Heart left ventricle (tissue), 16 donors: ENCODE measurements at regions of chr22 and their contacts with region 1.

Region 1: GRCh38 chr22:21735200-21736076 is at the start of gene YPEL1:
- DNase-seq: peak; percentile 97 to 99 (median 98)
- ATAC-seq: peak; percentile 94 to 99 (median 98)
- H3K4me3 ChIP-seq: peak within 1 kb of the TSS; percentile 42 to 87 (median 70)
- H3K27ac ChIP-seq: peak within 1 kb of the TSS; percentile 41 to 87 (median 74)
- H3K4me1 ChIP-seq: peaks cover 0 to 18% (median 8%) of the 10 kb centered on the region in 12 donors
- H3K27me3 ChIP-seq: no peaks in the 10 kb centered on the region
- CTCF ChIP-seq: peak in 1 of 12 donors; percentile 4
- POLR2A ChIP-seq: peak; percentile 92 to 99
- total RNA-seq, gene YPEL1: 6.3 to 10.0 (median 7.5) TPM

Region 2: DNA sequence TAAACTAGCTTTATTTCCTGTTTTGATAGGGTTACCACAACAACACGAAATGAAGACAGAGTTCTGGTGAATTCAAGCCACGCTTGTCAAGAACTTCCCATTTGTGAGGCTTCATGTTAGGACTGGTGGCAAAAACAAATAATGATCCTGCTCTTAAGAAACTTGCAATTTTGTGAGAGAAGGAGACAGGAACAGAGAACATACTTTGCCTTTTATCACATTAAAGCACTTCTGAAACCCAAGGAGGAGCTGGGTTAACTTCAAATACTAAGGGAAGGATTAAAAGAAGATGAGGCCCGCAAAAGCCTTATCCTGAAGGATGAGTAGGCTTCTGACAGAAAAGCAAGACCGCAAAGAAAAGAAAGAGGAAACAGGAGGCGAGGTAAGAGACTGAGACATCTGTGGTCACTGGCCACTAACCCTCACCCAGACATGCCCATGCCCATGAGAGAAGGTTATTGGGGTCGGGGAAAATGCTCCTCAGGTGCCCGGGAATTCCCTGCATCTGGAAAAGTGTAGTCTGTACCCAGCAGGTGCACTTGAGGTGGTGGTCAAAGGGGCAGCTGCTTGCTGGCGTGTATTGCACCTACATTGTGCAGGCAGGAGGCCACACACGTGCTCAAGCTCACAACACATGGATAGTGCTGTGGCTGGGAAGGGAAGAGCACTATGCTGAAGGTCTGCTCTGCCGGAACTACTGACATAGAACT is 81.5 kb after region 1 on chr22:
- intact Hi-C with region 1: loop called in 1 of 10 experiments (anchors 10 kb)
- DNase-seq: no peak
- ATAC-seq: peak; percentile 62 to 92 (median 88)
- H3K4me3 ChIP-seq: peak overlapping the region in 4 of 12 donors; percentile 2 to 29 (median 3)
- H3K27ac ChIP-seq: peak overlapping the region in 10 of 12 donors; percentile 28 to 90 (median 59)
- H3K4me1 ChIP-seq: peaks cover 5 to 56% (median 36%) of the 10 kb centered on the region in 12 donors
- H3K27me3 ChIP-seq: no peaks in the 10 kb centered on the region
- CTCF ChIP-seq: no peak
- POLR2A ChIP-seq: no peak

Region 3: GRCh38 chr22:21837248-21837979 is 102.0 kb after region 1 on chr22:
- intact Hi-C with region 1: no loop called
- DNase-seq: peak in 1 of 5 donors; percentile 42
- ATAC-seq: peak; percentile 91 to 96 (median 94)
- H3K4me3 ChIP-seq: peak overlapping the region in 1 of 12 donors; percentile 7
- H3K27ac ChIP-seq: peak overlapping the region; percentile 71 to 93 (median 88)
- H3K4me1 ChIP-seq: peaks cover 10 to 66% (median 51%) of the 10 kb centered on the region in 12 donors
- H3K27me3 ChIP-seq: no peaks in the 10 kb centered on the region
- CTCF ChIP-seq: no peak
- POLR2A ChIP-seq: no peak

Region 4: DNA sequence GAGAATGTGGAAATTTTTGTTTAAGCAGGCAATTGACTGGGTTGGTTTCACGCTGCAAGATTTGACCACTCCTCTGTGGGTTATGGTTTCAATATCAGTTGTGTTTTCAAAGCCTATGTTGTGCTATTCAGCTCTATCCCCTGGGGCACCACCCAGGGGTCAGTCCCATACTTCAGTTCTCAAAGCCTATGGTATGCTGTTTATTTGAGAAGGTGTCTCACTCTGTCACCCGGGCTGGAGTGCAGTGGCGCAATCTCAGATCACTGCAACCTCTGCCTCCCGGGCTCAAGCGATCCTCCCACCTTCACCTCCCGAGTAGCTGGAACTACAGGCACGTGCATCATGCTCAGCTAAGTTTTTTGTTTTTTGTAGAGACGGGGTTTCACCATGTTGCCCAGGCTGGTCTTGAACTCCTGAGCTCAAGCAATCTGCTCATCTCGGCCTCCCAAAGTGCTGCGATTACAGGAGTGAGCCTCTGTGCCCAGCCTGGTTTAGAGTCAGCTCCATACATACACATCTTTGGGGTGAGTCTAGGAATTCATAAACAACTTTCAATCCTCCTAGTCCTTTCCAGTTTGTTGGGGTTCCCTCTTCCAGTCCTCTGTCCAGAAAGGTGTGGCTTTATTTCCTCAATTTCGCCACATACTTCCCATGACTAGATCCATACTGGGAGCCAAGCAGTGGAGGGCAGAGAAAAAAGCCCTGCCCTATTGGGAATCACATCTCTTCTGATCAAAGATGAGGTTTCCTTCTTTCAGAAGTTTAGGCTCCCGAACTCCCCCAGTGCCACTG is 167.1 kb after region 1 on chr22:
- intact Hi-C with region 1: loop called in 1 of 10 experiments (anchors 10 kb)
- DNase-seq: no peak
- ATAC-seq: no peak
- H3K4me3 ChIP-seq: no peak overlapping the region
- H3K27ac ChIP-seq: no peak overlapping the region
- H3K4me1 ChIP-seq: no peaks in the 10 kb centered on the region
- H3K27me3 ChIP-seq: no peaks in the 10 kb centered on the region
- CTCF ChIP-seq: no peak
- POLR2A ChIP-seq: no peak